ENCODE measurements at regions of chr7 and their contacts with region 1.

Region 1: GRCh38 chr7:33744293-33745075 is 160.9 kb upstream of the BMPER start:
- DNase-seq: no peak
- ATAC-seq: peak; percentile 70 to 85 (median 78)
- H3K4me3 ChIP-seq: no peak overlapping the region
- H3K27ac ChIP-seq: no peak overlapping the region
- H3K4me1 ChIP-seq: no peaks in the 10 kb centered on the region
- H3K27me3 ChIP-seq: no peaks in the 10 kb centered on the region
- CTCF ChIP-seq: peak; percentile 44 to 61 (median 54)
- POLR2A ChIP-seq: no peak

Region 2: GRCh38 chr7:33423646-33424020 is 320.9 kb before region 1 on chr7:
- intact Hi-C with region 1: loop called in 1 of 2 experiments (anchors 10 kb)
- DNase-seq: no peak
- ATAC-seq: peak in 3 of 4 donors; percentile 65 to 71 (median 66)
- H3K4me3 ChIP-seq: no peak overlapping the region
- H3K27ac ChIP-seq: no peak overlapping the region
- H3K4me1 ChIP-seq: no peaks in the 10 kb centered on the region
- H3K27me3 ChIP-seq: no peaks in the 10 kb centered on the region
- CTCF ChIP-seq: peak; percentile 44 to 58 (median 48)
- POLR2A ChIP-seq: no peak

Region 3: GRCh38 chr7:33853361-33854062 is 109.0 kb after region 1 on chr7:
- intact Hi-C with region 1: no loop called
- DNase-seq: no peak
- ATAC-seq: no peak
- H3K4me3 ChIP-seq: no peak overlapping the region
- H3K27ac ChIP-seq: no peak overlapping the region
- H3K4me1 ChIP-seq: no peaks in the 10 kb centered on the region
- H3K27me3 ChIP-seq: no peaks in the 10 kb centered on the region
- CTCF ChIP-seq: no peak
- POLR2A ChIP-seq: no peak